Mammary epithelial cell (primary cell): ENCODE measurements at regions of chr11 and their contacts with region 1.

Region 1: GRCh38 chr11:5004424-5005274 is 10.0 kb downstream of the OR51L1 start:
- DNase-seq: peak; percentile 63
- H3K4me3 ChIP-seq: no peak overlapping the region
- H3K27ac ChIP-seq: peak overlapping the region; percentile 42
- H3K4me1 ChIP-seq: peaks cover 6% of the 10 kb centered on the region
- H3K27me3 ChIP-seq: no peaks in the 10 kb centered on the region
- CTCF ChIP-seq: peak; percentile 57 to 73

Region 2: DNA sequence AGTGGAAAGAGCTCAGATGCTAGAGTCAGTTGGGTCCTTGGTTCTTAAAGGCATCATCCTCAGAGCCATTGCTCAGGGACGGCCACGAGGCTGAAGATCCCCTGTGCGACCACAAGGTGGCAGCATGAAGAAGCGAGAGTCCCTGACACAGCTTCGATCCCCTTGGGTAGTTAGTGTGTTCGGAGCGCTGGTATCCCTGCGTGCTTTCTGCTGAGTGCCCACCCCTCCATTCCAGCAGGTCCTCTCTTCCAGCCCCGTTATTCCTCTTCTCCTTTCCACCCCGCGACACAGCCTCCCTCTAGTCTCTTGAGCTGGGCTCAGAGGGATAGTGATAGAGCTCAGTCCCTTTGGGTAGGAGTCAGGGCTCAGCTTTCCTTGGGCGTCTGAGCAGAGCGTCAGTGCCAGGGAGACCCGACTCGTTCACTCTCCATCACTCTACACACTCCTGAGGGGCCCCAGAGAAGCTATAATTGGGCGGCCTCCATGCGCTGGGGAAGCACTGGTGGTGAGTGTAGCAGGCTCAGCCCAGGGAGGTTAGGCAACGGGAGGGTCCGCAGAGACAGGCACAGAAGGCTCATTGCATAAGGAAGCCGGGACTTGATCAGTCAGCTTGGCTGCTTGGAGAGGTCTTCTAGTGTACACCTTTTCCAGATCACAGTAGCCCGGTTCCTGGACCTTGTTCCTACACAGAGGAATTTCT is 367.5 kb before region 1 on chr11 and contains the start of gene OR51D1:
- CTCF ChIA-PET with region 1: interaction called, 3 read pairs
- dilution Hi-C with region 1: no loop called
- in situ Hi-C with region 1: loop called in 1 of 2 experiments (anchors 5 kb)
- intact Hi-C with region 1: loop called (anchors 1 kb)
- DNase-seq: peak; percentile 51
- H3K4me3 ChIP-seq: peak within 1 kb of the TSS in 1 of 3 experiments; percentile 2
- H3K27ac ChIP-seq: no peak within 1 kb of the TSS
- H3K4me1 ChIP-seq: no peaks in the 10 kb centered on the region
- H3K27me3 ChIP-seq: no peaks in the 10 kb centered on the region
- CTCF ChIP-seq: peak; percentile 90 to 93
- total RNA-seq, gene OR51D1: not detected

Region 3: GRCh38 chr11:4826425-4826824 is 178.2 kb before region 1 on chr11:
- CTCF ChIA-PET with region 1: no interaction called
- dilution Hi-C with region 1: no loop called
- in situ Hi-C with region 1: no loop called
- intact Hi-C with region 1: loop called (anchors 2 kb)
- DNase-seq: no peak
- H3K4me3 ChIP-seq: no peak overlapping the region
- H3K27ac ChIP-seq: no peak overlapping the region
- H3K4me1 ChIP-seq: no peaks in the 10 kb centered on the region
- H3K27me3 ChIP-seq: no peaks in the 10 kb centered on the region
- CTCF ChIP-seq: peak in 1 of 2 donors; percentile 60

Region 4: DNA sequence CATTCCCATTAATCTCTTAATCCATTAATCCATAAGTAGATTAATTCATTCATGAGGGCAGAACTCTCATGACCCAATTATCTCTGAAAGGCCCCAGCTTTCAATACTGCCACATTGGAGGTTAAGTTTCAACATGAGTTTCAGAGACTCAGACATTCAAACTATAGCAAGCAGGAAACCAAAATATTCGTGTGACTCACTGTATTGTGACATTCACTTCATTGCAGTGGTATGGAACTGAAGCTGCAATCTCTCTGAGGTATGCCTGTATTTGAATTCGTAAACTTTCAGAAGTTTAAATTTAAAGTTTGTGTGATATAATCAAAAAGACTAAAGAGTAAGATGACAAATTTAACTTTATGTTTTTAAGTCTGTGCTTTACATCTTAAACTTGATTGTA is 38.7 kb after region 1 on chr11:
- CTCF ChIA-PET with region 1: no interaction called
- dilution Hi-C with region 1: loop called (anchors 5 kb)
- in situ Hi-C with region 1: no loop called
- intact Hi-C with region 1: no loop called
- DNase-seq: peak; percentile 63
- H3K4me3 ChIP-seq: no peak overlapping the region
- H3K27ac ChIP-seq: no peak overlapping the region
- H3K4me1 ChIP-seq: no peaks in the 10 kb centered on the region
- H3K27me3 ChIP-seq: no peaks in the 10 kb centered on the region
- CTCF ChIP-seq: no peak